Endothelial cell of umbilical vein (primary cell): ENCODE measurements at regions of chr14 and their contacts with region 1.

Region 1: GRCh38 chr14:63641473-63642228 is at the start of gene WDR89:
- DNase-seq: peak; percentile 100
- H3K4me3 ChIP-seq: peak within 1 kb of the TSS; percentile 90 to 95 (median 93)
- H3K27ac ChIP-seq: peak within 1 kb of the TSS; percentile 80
- H3K4me1 ChIP-seq: peaks cover 4% of the 10 kb centered on the region
- H3K27me3 ChIP-seq: no peaks in the 10 kb centered on the region
- CTCF ChIP-seq: peak; percentile 79
- POLR2A ChIP-seq: peak; percentile 81
- total RNA-seq, gene WDR89: 10.7 and 12.0 TPM in 2 replicates

Region 2: DNA sequence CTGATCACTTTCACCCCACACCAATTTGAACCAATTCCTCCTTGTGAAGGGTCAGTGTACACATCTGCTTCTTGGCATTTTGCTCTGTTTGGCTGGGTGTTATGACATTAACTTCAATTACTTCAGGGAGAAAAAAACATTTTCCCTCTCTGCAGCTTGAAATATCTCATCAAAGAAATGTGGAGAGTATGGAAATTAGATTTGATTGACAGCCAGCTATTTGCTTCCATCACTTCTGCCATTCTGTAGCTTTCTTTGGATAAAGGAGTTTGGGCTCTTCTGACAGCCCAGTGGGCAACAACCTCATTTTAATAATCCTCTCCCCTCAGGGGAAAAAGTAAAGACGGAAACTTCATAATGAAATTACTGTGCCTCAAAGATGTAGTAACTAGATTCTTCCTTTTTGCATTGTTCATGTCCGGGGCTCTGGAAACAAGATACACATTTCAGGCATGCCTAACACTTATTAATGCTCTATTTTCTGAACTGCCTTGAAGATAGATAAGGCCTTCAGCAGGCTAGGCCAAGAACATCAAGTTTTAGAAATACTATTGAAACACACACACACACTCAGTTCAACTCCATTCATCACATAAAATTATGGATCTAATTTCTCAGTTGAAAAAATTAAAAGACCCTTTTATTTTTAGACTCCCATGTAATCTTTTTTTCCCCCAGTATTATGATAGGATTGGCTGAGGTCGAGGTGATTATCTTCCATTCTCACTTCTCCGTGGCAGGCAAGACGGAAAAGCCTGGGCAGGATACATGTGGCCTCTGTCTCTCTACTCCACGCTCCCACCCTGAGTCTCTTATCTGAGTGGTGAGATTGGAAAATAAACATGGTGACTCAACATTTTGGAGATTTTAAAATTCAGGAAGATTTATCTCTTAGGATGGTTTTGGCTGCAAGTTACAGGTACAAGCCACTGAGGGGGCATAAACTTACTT is 312.6 kb before region 1 on chr14:
- CTCF ChIA-PET with region 1: no interaction called
- POLR2A ChIA-PET with region 1: no interaction called
- dilution Hi-C with region 1: no loop called
- intact Hi-C with region 1: no loop called
- DNase-seq: no peak
- H3K4me3 ChIP-seq: no peak overlapping the region
- H3K27ac ChIP-seq: no peak overlapping the region
- H3K4me1 ChIP-seq: no peaks in the 10 kb centered on the region
- H3K27me3 ChIP-seq: peaks cover 15 to 17% of the 10 kb centered on the region in 2 experiments
- CTCF ChIP-seq: no peak
- POLR2A ChIP-seq: no peak

Region 3: GRCh38 chr14:63543000-63543825 is 98.4 kb before region 1 on chr14 and contains the start of gene PPP2R5E:
- CTCF ChIA-PET with region 1: interaction called, 8 read pairs
- POLR2A ChIA-PET with region 1: no interaction called
- dilution Hi-C with region 1: no loop called
- intact Hi-C with region 1: loop called (anchors 1 kb)
- DNase-seq: peak; percentile 99
- H3K4me3 ChIP-seq: peak within 1 kb of the TSS; percentile 74 to 91 (median 90)
- H3K27ac ChIP-seq: peak within 1 kb of the TSS; percentile 74
- H3K4me1 ChIP-seq: peaks cover 16% of the 10 kb centered on the region
- H3K27me3 ChIP-seq: no peaks in the 10 kb centered on the region
- CTCF ChIP-seq: no peak
- POLR2A ChIP-seq: peak; percentile 98
- total RNA-seq, gene PPP2R5E: 51.1 and 52.5 TPM in 2 replicates

Region 4: DNA sequence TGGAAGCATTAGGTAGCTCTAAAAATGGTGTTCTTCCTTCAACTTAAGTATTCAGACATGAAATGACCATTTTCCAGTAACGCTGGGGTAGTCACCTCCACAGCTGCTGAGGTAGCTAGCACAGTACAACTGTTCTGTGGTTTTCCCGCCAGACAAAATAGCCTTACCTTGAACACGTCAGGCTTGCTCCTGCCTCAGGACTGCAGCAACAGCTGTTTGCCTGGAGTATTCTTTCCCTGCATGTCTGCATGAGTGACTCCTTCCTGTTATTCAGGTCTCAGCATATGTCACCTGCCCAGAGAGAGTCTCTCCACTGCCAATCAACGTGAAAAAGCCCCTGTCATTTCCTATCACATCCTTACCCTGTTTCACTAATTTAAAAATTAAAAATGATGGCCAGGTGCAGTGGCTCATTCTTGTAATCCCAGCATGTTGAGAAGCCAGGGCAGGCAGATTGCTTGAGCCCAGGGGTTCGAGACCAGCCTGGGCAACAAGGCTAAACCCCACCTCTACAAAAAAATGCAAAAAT is 37.8 kb before region 1 on chr14:
- CTCF ChIA-PET with region 1: no interaction called
- POLR2A ChIA-PET with region 1: no interaction called
- dilution Hi-C with region 1: no loop called
- intact Hi-C with region 1: no loop called
- DNase-seq: no peak
- H3K4me3 ChIP-seq: no peak overlapping the region
- H3K27ac ChIP-seq: no peak overlapping the region
- H3K4me1 ChIP-seq: no peaks in the 10 kb centered on the region
- H3K27me3 ChIP-seq: no peaks in the 10 kb centered on the region
- CTCF ChIP-seq: no peak
- POLR2A ChIP-seq: no peak

Region 5: GRCh38 chr14:63677821-63678380 is 36.2 kb after region 1 on chr14:
- CTCF ChIA-PET with region 1: no interaction called
- POLR2A ChIA-PET with region 1: no interaction called
- dilution Hi-C with region 1: no loop called
- intact Hi-C with region 1: loop called (anchors 1 kb)
- DNase-seq: peak; percentile 94
- H3K4me3 ChIP-seq: no peak overlapping the region
- H3K27ac ChIP-seq: peak overlapping the region; percentile 43
- H3K4me1 ChIP-seq: peaks cover 10% of the 10 kb centered on the region
- H3K27me3 ChIP-seq: no peaks in the 10 kb centered on the region
- CTCF ChIP-seq: no peak
- POLR2A ChIP-seq: no peak

Region 6: GRCh38 chr14:63770187-63770807 is 128.6 kb after region 1 on chr14:
- CTCF ChIA-PET with region 1: interaction called, 23 read pairs
- POLR2A ChIA-PET with region 1: no interaction called
- dilution Hi-C with region 1: no loop called
- intact Hi-C with region 1: no loop called
- DNase-seq: peak; percentile 63
- H3K4me3 ChIP-seq: no peak overlapping the region
- H3K27ac ChIP-seq: no peak overlapping the region
- H3K4me1 ChIP-seq: no peaks in the 10 kb centered on the region
- H3K27me3 ChIP-seq: no peaks in the 10 kb centered on the region
- CTCF ChIP-seq: peak; percentile 53 to 58
- POLR2A ChIP-seq: no peak

Region 7: GRCh38 chr14:64503478-64504309 is 862.0 kb after region 1 on chr14 and contains the start of gene ZBTB25:
- CTCF ChIA-PET with region 1: no interaction called
- POLR2A ChIA-PET with region 1: no interaction called
- dilution Hi-C with region 1: no loop called
- intact Hi-C with region 1: loop called (anchors 10 kb)
- DNase-seq: peak; percentile 95
- H3K4me3 ChIP-seq: peak within 1 kb of the TSS; percentile 71 to 97 (median 93)
- H3K27ac ChIP-seq: peak within 1 kb of the TSS; percentile 95
- H3K4me1 ChIP-seq: peaks cover 38% of the 10 kb centered on the region
- H3K27me3 ChIP-seq: no peaks in the 10 kb centered on the region
- CTCF ChIP-seq: no peak
- POLR2A ChIP-seq: peak; percentile 84
- total RNA-seq, gene ZBTB25: 6.4 and 7.7 TPM in 2 replicates